ENCODE measurements at regions of chr9 and their contacts with region 1.

Region 1: GRCh38 chr9:21455320-21455719 is 15.1 kb downstream of the IFNA1 start:
- DNase-seq: peak; percentile 32
- ATAC-seq: peak; percentile 83
- H3K4me3 Mint-ChIP-seq: no peak overlapping the region
- H3K27ac Mint-ChIP-seq: no peak overlapping the region
- H3K4me1 Mint-ChIP-seq: no peaks in the 10 kb centered on the region
- H3K27me3 Mint-ChIP-seq: peaks cover 23% of the 10 kb centered on the region

Region 2: DNA sequence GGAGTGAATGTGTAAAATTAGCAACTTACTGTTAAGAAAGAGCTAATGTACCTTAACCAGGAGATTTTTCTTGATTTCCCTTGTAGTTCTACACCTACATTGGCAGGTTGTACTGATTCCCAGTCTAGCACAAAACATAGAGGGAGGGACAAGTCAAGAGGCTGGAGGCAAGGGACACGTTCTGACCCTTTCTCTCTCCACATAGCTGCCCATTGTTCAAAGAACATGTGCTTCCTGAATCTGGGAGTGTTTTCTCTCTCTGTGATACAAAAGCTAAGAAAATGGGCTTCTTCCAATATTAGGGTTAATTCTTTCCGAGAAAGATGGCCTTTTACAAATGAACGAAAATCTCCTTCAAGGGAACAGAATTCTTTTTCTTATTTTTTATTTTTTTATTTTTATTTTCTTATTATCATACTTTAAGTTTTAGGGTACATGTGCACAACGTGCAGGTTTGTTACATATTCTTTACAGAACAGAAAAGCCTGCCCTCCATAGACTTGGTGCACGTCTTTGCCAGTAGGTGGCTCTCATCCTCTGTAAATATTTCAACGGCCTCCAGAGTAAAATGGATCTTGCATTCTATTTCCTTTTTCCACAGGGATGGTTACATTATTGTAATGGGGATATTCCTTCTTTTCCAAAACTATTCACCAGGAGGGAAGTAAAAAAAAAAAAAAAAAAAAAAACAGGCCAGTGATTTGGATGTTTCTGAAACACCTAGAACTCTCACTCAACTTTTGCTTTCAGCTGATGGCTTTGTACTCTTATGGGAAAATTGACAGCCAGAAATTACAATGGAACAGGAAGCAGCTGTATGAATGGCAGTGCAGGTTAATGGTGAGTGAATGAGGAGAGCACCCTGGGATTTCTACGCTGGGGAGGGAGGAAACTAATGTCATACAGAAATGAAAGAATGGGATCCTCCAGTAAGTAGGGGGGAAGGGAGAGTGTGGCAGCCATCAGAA is 137.1 kb before region 1 on chr9:
- CTCF ChIA-PET with region 1: interaction called, 14 read pairs
- POLR2A ChIA-PET with region 1: no interaction called
- DNase-seq: peak; percentile 57
- ATAC-seq: peak; percentile 74
- H3K4me3 Mint-ChIP-seq: no peak overlapping the region
- H3K27ac Mint-ChIP-seq: no peak overlapping the region
- H3K4me1 Mint-ChIP-seq: peaks cover 1% of the 10 kb centered on the region
- H3K27me3 Mint-ChIP-seq: no peaks in the 10 kb centered on the region

Region 3: DNA sequence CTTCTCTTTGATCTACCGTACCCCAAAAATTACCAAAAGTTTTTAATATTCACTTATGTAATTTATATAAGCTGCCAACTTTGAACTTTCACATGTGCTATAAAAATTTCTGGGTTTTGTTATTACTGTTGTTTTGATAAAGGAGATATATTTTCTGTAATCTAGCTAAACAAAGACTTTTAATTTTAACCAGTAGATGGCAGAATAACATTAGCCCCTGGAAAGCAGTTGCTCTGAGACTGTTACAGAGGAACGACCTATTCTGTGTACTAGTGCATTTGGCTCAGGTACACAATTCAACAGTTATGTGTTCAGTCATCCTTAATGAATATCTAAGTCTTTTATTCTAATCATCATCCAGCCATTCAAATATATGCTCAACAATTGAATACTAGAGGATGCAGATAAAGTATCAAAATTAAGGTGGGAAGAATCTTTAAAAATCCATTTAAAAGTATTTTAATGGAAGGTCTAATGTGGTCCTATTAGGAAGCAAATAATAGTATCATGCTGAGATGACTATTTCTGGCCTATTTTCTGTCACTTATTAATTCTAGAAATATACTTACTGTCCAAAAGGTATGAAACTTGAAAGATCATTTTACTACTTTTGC is 128.7 kb before region 1 on chr9:
- CTCF ChIA-PET with region 1: interaction called, 13 read pairs
- POLR2A ChIA-PET with region 1: no interaction called
- DNase-seq: no peak
- ATAC-seq: peak; percentile 80
- H3K4me3 Mint-ChIP-seq: no peak overlapping the region
- H3K27ac Mint-ChIP-seq: no peak overlapping the region
- H3K4me1 Mint-ChIP-seq: peaks cover 37% of the 10 kb centered on the region
- H3K27me3 Mint-ChIP-seq: no peaks in the 10 kb centered on the region

Region 4: DNA sequence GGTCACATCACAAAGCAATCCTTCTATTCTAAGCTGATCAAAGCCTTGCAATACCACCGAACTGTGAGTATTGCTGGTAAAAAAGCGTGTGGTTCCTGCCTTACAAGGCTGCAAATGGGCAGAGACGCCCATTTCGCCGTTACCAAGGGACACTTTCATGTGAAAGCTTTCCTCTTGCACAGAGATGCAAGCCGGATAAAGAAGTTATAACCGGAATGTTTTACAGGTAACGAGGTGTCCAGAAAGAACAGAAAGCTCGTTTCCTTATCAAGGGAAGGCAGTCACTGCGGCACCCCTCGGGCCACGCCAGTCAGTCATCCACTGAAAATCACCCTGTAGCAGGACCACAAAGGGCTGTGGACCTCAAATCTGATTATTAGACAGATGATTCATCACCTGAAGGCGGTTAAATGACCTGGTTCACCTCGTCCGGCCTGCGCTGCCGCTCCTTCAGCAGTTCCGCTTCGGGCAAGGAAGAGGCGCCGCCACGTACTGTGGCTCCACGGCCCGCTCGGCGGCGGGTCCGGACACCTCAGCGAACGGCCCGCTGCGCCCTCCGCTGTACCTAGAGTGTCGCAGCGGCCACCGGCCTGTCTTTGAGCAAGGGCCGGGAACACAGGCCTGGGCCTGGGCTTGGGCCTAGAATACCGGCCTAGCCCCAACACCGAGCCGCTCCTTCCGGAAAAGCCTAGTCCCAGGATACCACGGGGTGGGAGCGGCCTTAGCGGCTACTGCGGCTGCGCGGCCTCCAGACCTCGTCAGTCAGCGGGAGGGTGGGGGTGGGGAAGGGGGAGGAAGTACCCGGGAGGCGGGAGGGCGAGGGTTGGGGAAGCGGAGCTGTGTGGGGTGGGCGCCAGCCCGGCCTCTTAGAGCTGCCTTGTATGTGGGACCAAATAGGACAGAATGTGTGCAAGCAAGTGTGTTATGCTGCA is 120.4 kb before region 1 on chr9 and contains the start of gene KLHL9:
- CTCF ChIA-PET with region 1: interaction called, 13 read pairs
- POLR2A ChIA-PET with region 1: no interaction called
- DNase-seq: peak; percentile 90
- ATAC-seq: peak; percentile 90
- H3K4me3 Mint-ChIP-seq: peak within 1 kb of the TSS; percentile 89
- H3K27ac Mint-ChIP-seq: peak within 1 kb of the TSS; percentile 91
- H3K4me1 Mint-ChIP-seq: peaks cover 45% of the 10 kb centered on the region
- H3K27me3 Mint-ChIP-seq: peaks cover 11% of the 10 kb centered on the region
- total RNA-seq, gene KLHL9: 17.9 to 18.8 TPM